ENCODE measurements at regions of chr1 and their contacts with region 1.

Region 1: GRCh38 chr1:192550922-192551534 is 24.5 kb upstream of the RGS1 start:
- DNase-seq: peak; percentile 25
- CTCF ChIP-seq: no peak

Region 2: GRCh38 chr1:192539297-192540092 is 11.5 kb before region 1 on chr1:
- CTCF ChIA-PET with region 1: interaction called, 14 read pairs
- POLR2A ChIA-PET with region 1: interaction called, 3 read pairs
- DNase-seq: no peak
- CTCF ChIP-seq: no peak

Region 3: DNA sequence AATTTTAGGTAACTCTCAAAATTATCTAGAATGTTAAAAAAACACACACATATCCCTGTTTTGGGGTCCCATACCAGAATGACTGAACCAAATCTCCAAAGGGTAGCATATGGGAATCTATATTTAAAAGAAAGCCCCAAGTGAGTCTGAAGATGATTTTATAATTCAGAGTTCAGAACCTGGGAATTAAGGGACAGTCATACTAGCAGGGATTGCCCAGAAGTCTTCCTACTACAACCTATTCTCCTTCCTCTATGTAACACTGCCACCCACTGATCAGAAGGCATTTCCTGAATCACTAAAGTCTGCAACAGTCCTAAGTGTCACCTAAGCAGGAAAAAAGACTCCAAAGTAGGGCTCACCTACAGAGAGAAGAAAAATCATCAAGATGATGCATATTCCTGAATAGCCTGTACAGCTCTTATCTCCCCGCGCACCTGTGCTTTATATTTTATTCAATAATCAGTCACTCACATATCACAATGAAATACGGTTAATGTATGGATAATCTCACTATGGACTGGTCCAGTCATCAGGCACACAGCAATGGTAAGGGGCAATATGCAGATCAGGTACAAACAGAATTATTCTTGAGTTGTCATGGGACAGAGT is 29.4 kb after region 1 on chr1:
- CTCF ChIA-PET with region 1: interaction called, 5 read pairs
- POLR2A ChIA-PET with region 1: interaction called, 11 read pairs
- DNase-seq: no peak
- CTCF ChIP-seq: peak; percentile 65

Region 4: DNA sequence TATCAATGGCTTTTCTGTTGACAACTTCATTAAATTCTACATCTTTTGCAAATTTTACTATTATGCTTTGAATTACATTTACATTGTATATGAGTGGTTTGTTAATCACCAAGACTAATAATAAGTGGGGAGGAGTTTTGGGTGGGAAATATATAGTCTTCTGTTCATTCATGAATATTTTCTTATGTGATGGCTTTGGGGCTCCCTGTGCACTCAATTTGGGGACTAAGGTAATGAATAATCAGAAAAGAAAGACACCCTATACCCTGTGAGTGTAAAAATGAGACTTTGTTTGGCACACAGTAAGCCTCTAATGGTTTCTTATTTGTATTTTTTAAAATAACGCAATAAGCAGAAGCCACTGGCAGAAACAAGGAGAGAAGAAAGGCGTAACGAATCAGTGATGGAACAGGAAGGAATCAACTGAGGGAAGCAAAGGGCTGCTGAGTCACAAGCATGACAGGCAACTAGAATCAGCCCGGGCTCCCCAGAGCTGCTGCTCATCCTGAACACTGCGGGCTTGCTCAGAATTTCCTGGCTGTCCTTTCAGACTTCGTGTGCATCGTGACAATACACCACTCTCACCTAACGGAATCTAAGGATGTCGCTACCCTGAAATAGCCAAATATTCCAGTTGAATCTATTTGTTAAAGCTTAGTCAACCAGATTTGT is 237.0 kb after region 1 on chr1:
- CTCF ChIA-PET with region 1: no interaction called
- POLR2A ChIA-PET with region 1: no interaction called
- DNase-seq: no peak
- CTCF ChIP-seq: no peak